ENCODE measurements at regions of chr5 and their contacts with region 1.

Region 1: GRCh38 chr5:90783460-90784333 is 225.1 kb downstream of the ADGRV1 start:
- DNase-seq: peak in 1 of 2 experiments; percentile 61
- H3K4me3 ChIP-seq: no peak overlapping the region
- H3K27ac ChIP-seq: no peak overlapping the region
- H3K4me1 ChIP-seq: no peaks in the 10 kb centered on the region
- H3K27me3 ChIP-seq: no peaks in the 10 kb centered on the region
- CTCF ChIP-seq: peak; percentile 94

Region 2: DNA sequence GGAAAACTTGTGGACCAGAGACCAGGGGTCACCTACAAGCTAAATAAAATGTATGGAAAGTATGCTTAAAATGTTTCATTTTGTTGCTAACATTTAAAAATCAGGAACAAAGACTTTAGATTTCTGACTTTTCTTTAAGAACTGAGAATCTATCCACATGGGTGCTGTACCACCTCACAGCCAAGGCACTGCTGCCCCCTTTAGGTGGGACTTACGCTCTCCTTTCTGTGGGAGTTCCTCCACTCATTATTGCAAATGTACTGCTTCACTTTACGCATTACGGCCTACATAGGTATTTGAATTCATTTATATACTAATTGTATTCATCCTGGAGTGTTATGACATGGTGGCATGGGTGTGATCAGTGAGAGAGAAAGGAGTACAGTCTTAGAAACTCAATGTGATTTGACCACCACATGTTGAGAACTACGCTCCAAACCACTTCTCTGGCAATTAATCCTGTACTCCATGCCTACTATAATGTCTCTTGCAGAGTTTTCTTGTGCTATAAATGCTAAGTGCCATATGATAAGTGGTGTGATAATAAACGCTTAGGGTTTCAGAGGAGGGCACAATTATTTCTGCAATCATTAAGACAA is 349.5 kb before region 1 on chr5:
- CTCF ChIA-PET with region 1: interaction called, 3 read pairs
- POLR2A ChIA-PET with region 1: no interaction called
- intact Hi-C with region 1: loop called (anchors 1 kb)
- DNase-seq: peak in 1 of 2 experiments; percentile 27
- H3K4me3 ChIP-seq: no peak overlapping the region
- H3K27ac ChIP-seq: no peak overlapping the region
- H3K4me1 ChIP-seq: peaks cover 19% of the 10 kb centered on the region
- H3K27me3 ChIP-seq: no peaks in the 10 kb centered on the region
- CTCF ChIP-seq: peak; percentile 56

Region 3: DNA sequence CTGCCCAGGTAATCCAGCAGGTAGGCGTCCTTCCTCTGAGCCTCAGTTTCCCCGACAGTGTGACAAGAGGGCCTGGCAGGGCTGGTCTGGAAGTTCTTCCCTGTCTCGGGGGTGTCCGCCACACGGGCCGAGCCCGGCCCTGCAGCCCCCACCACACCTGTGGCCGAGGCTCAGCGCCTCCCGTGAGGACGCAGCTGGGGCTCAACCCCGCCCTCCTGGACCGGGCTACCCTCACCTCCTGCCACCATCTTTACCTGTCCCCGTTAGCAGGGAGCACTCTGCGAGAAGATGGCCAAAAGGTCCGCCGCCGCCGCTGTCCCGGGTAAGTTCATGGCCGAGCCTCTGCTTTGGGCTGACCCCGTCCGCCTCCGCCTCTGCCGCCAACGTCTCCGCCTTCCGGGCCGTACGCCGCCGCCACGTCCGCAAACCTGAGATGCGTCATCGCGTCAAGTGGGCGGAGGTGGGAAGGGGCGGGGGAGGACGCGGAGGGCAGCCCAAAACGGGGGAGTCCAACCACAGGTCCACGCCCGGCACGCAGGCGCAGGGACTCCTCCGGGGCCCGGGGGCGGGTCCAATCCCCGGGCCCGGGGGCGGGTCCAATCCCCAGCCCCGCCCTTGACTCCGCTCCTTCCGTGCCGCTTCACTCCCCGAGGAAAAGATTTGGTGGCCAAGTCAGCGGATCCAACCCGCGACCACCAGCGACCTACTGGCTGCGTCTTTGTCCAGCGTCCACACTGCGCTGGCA is 254.3 kb before region 1 on chr5 and contains the start of gene LYSMD3:
- CTCF ChIA-PET with region 1: no interaction called
- POLR2A ChIA-PET with region 1: no interaction called
- intact Hi-C with region 1: loop called (anchors 5 kb)
- DNase-seq: peak; percentile 91 to 95
- H3K4me3 ChIP-seq: peak within 1 kb of the TSS; percentile 82
- H3K27ac ChIP-seq: peak within 1 kb of the TSS; percentile 54
- H3K4me1 ChIP-seq: peaks cover 15% of the 10 kb centered on the region
- H3K27me3 ChIP-seq: peaks cover 4% of the 10 kb centered on the region; the same call in 1 of the 2 replicates
- CTCF ChIP-seq: no peak
- total RNA-seq, gene LYSMD3: 4.6 and 10.6 TPM in 2 replicates

Region 4: GRCh38 chr5:90606539-90606938 is 177.2 kb before region 1 on chr5:
- CTCF ChIA-PET with region 1: no interaction called
- POLR2A ChIA-PET with region 1: no interaction called
- intact Hi-C with region 1: loop called (anchors 5 kb)
- DNase-seq: no peak
- H3K4me3 ChIP-seq: no peak overlapping the region
- H3K27ac ChIP-seq: no peak overlapping the region
- H3K4me1 ChIP-seq: no peaks in the 10 kb centered on the region
- H3K27me3 ChIP-seq: no peaks in the 10 kb centered on the region
- CTCF ChIP-seq: peak; percentile 50; the same call in 1 of the 2 replicates

Region 5: DNA sequence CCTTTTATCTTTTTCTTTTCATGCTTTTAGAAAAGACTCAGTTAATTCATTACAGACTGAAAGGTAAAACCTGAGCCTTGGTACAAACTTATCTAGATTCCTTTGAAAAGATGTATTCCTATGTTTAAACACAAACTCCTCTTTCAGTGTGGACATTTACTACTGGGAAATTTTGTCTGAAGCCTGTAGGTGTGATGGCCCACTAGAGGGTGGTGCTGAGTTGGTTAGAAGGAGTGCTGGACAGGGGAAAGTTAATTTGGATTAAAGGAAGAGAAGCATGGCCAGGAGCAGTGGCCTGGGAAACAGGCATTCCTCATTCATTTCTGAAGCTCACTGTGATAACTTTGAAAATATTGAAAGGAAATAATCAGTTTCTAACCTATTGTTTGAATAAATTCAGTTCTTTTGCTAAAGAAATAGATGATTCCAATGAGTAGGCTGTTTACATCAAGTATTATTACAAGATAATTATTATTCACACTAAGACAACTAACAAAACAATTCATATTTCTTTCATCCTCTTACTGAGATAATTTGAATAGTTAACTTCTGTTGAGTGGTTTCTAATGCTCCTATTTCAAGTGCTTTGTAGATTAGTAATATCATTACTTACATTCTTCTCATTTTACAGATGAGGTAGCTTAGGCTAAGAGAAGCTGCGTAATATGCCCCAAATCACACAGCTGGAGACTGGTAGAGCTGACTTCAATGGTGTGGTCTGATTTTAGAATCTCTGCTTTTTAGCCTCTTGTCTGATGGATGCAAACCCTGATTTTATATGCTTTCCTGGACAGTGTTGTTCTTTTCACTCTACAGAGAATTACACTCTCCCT is 74.2 kb before region 1 on chr5:
- CTCF ChIA-PET with region 1: interaction called, 4 read pairs
- POLR2A ChIA-PET with region 1: no interaction called
- intact Hi-C with region 1: loop called (anchors 1 kb)
- DNase-seq: peak in 1 of 2 experiments; percentile 25
- H3K4me3 ChIP-seq: no peak overlapping the region
- H3K27ac ChIP-seq: no peak overlapping the region
- H3K4me1 ChIP-seq: no peaks in the 10 kb centered on the region
- H3K27me3 ChIP-seq: no peaks in the 10 kb centered on the region
- CTCF ChIP-seq: peak; percentile 75

Region 6: GRCh38 chr5:90830058-90830457 is 46.4 kb after region 1 on chr5:
- CTCF ChIA-PET with region 1: no interaction called
- POLR2A ChIA-PET with region 1: no interaction called
- intact Hi-C with region 1: no loop called
- DNase-seq: no peak
- H3K4me3 ChIP-seq: no peak overlapping the region
- H3K27ac ChIP-seq: no peak overlapping the region
- H3K4me1 ChIP-seq: no peaks in the 10 kb centered on the region
- H3K27me3 ChIP-seq: no peaks in the 10 kb centered on the region
- CTCF ChIP-seq: no peak

Measured in PC-9 (cell line).